ENCODE measurements at regions of chr6 and their contacts with region 1.

Region 1: GRCh38 chr6:34986845-34987246 is 97.8 kb downstream of the ANKS1A start:
- ATAC-seq: peak; percentile 11 to 94 (median 87)
- H3K4me3 ChIP-seq: no peak overlapping the region
- H3K27ac ChIP-seq: no peak overlapping the region
- H3K4me1 ChIP-seq: peaks cover 3 to 4% of the 10 kb centered on the region in 2 donors

Region 2: DNA sequence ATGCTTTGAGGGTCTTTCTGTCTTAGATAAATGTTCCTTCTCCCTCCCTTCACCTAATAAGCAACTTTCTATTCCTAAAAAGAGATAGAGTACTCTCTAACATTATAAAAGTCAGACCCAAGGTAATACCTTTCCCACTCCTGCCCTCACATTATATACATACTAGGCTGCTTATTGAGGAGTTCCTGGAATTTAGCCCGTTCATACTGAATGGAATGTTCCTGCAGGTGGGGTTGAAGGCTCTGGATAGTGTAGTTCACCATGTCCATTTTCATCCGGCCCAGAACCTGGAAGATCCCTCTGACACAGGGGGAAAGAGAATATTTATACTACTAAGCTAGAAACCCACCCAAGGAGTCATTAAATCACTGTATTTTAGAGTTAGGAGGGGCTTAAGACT is 133.9 kb after region 1 on chr6:
- in situ Hi-C with region 1: loop called in 6 of 9 experiments (anchors 25 kb)
- ATAC-seq: no peak
- H3K4me3 ChIP-seq: no peak overlapping the region
- H3K27ac ChIP-seq: no peak overlapping the region
- H3K4me1 ChIP-seq: no peaks in the 10 kb centered on the region

Region 3: DNA sequence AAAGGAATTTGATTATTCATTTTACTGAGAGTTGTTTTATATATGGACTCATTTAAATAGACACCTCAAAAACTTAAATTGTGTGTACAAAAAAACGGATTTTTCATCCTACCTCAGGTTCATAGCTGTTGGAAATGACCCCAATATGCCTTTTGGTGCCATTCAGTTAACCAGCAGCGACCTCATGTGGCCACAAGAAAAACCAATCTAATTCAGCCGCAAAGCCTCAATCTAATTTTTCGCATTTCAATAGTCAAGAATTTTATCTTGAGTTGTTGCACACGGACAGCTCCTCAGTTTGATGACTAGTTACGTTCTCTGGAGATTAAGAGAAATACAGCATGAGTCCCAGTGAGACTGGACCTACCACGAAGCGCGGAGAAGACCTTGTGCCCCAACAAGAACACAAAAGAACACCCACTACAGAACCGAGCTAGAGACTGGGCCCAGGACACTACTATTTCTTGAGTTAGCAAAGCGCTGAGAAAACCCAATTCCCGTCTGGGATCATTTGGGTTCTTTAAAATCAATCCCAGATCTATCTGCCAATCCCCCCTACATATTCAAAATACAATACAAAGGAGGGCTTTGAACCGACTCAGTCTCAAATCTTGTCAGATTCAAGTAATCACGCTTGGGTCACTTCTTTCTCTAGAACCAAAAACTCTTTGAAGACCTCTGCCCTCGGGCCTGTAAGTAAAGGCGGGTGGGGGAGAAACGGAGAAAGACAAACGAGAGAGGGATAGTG is 153.2 kb after region 1 on chr6:
- in situ Hi-C with region 1: loop called in 6 of 9 experiments (anchors 10 to 25 kb)
- ATAC-seq: peak in 2 of 8 experiments; percentile 16 to 50
- H3K4me3 ChIP-seq: no peak overlapping the region
- H3K27ac ChIP-seq: no peak overlapping the region
- H3K4me1 ChIP-seq: peaks cover 2 to 3% of the 10 kb centered on the region in 2 donors

Region 4: GRCh38 chr6:35213824-35214756 is 227.2 kb after region 1 on chr6 and contains the start of gene SCUBE3:
- in situ Hi-C with region 1: loop called in 2 of 9 experiments (anchors 25 kb)
- ATAC-seq: peak; percentile 67 to 89 (median 78)
- H3K4me3 ChIP-seq: peak within 1 kb of the TSS; percentile 52 to 86 (median 57)
- H3K27ac ChIP-seq: peak within 1 kb of the TSS; percentile 82 to 91
- H3K4me1 ChIP-seq: peaks cover 39 to 48% of the 10 kb centered on the region in 2 donors
- total RNA-seq, gene SCUBE3: 2.6 to 14.6 (median 3.3) TPM

Region 5: GRCh38 chr6:35240840-35241801 is 254.3 kb after region 1 on chr6:
- in situ Hi-C with region 1: loop called in 4 of 9 experiments (anchors 25 kb)
- ATAC-seq: peak; percentile 81 to 98 (median 90)
- H3K4me3 ChIP-seq: no peak overlapping the region
- H3K27ac ChIP-seq: no peak overlapping the region
- H3K4me1 ChIP-seq: peaks cover 0 to 6% of the 10 kb centered on the region in 2 donors

Region 6: GRCh38 chr6:36015666-36016065 is 1028.8 kb after region 1 on chr6:
- in situ Hi-C with region 1: no loop called
- ATAC-seq: no peak
- H3K4me3 ChIP-seq: no peak overlapping the region
- H3K27ac ChIP-seq: no peak overlapping the region
- H3K4me1 ChIP-seq: no peaks in the 10 kb centered on the region

Measured in motor neuron (in vitro differentiated cells).